ENCODE measurements at regions of chrX and their contacts with region 1.

Region 1: DNA sequence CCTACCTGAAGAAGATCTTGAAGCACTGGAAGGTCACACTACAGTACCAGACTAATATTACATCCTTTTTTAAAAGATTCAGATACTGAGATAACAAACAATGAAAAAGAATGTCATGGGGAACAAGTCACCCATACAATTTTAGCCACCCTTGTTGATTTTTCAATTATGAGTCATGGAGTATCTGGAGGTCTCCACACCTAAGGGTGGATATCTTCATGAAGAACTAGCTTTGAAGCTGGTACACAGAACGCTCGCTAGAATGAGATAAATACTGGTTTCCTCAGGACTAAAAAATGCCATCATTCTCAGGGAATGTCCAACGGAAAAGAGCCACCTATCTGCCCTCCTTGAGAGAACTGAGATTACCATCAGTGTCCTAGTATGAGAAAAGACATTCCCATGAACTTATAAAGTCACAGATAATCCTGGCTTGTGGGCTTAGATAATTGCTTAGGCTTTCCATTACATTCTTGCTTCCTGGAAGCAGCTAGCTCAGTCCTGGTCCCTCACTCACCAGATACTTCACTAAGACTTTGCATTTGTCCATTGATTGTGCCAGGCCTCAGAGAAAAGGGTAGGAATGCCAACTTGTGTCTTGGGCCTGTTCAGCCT is 166.7 kb downstream of the OR13H1 start:
- DNase-seq: peak in 1 of 2 experiments; percentile 56
- H3K4me3 ChIP-seq: no peak overlapping the region
- H3K27ac ChIP-seq: no peak overlapping the region
- H3K4me1 ChIP-seq: no peaks in the 10 kb centered on the region
- H3K27me3 ChIP-seq: no peaks in the 10 kb centered on the region
- CTCF ChIP-seq: no peak

Region 2: DNA sequence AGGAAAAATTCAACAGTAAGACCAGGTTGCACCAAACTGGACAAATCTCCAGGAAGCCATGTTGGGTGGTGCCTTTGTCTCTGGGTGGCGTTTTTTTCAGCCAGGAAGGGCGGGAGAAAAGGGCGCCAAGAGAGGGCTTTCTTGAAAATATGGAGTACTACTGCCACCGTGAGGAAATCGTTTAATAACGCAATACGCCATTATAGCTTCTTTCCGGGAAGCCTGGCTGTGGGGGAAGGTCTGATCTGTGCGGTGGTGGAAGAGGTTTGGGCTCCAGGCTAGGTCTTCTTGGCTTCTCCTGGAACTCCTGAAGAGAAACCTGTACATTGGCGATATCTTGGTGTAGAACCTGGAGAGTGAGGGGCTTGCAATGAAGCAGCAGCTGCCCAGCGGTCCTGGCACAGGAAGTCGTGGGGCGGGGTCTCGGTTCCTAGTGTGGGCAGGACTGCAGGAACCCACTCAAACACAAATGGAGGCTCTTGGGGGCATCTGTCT is 36.0 kb after region 1 on chrX:
- CTCF ChIA-PET with region 1: no interaction called
- POLR2A ChIA-PET with region 1: no interaction called
- intact Hi-C with region 1: loop called (anchors 1 kb)
- DNase-seq: peak in 1 of 2 experiments; percentile 67
- H3K4me3 ChIP-seq: no peak overlapping the region
- H3K27ac ChIP-seq: no peak overlapping the region
- H3K4me1 ChIP-seq: no peaks in the 10 kb centered on the region
- H3K27me3 ChIP-seq: no peaks in the 10 kb centered on the region
- CTCF ChIP-seq: no peak

Region 3: DNA sequence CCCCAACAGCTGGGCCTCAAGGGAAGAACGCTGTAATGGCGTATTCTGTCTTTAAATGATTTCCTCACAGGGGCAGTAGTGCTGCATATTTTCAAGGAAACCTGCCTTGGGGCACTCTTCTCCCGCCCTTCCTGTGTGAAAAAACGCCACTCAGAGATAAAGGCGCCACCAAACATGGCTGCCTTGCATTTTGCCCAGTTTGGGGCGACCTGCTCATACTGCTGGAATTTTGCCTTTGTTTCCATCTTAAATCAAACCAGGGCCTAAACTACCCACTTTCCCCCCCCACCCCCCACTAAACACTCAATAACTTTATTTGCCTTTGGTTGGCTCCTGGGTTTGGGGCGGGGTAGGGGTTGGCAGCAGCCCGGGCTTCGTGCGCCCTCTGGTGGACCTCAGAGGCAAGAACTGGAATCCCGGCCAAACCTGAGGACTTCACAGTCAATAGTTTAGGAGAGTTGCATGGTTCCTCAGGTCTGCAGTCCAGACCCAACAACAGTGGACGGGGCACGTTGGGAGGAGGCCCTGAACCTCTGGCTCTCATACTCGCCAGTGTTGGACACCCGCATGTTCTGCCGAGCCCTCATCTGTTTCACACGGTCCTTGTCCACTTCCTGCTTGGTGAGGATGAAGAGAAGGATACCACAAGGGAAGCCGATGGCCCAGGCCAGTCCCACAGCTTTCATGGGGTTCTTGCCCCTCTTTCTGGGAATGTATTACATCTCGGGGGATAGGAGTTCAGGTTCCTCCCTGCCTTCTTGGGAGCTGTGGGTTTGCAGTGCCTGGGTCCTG is 92.5 kb after region 1 on chrX:
- CTCF ChIA-PET with region 1: no interaction called
- POLR2A ChIA-PET with region 1: no interaction called
- intact Hi-C with region 1: loop called (anchors 1 kb)
- DNase-seq: peak in 1 of 2 experiments; percentile 21
- H3K4me3 ChIP-seq: no peak overlapping the region
- H3K27ac ChIP-seq: no peak overlapping the region
- H3K4me1 ChIP-seq: no peaks in the 10 kb centered on the region
- H3K27me3 ChIP-seq: no peaks in the 10 kb centered on the region
- CTCF ChIP-seq: peak; percentile 52

Region 4: GRCh38 chrX:132153166-132153565 is 442.6 kb after region 1 on chrX:
- CTCF ChIA-PET with region 1: no interaction called
- POLR2A ChIA-PET with region 1: no interaction called
- intact Hi-C with region 1: no loop called
- DNase-seq: no peak
- H3K4me3 ChIP-seq: no peak overlapping the region
- H3K27ac ChIP-seq: no peak overlapping the region
- H3K4me1 ChIP-seq: no peaks in the 10 kb centered on the region
- H3K27me3 ChIP-seq: no peaks in the 10 kb centered on the region
- CTCF ChIP-seq: no peak

Region 5: DNA sequence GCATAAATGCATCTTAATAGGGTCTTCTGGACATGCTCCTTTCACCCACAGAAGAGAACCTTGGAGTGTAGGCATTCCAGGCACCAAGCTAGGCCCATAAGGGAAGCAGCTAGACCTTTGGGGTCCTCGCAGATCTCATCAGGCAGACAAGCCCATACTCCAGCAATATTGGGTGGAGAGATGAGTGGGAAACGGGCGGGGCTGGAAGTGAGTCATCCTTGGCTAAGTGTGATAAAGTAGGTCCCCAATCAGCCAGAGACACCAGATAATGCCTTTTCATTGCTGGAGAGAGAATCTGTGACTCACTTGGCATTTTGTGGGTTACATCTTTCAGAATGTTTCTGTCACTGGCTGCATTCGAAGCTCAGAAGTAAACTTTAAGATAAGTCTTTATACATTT is 911.6 kb after region 1 on chrX:
- CTCF ChIA-PET with region 1: no interaction called
- POLR2A ChIA-PET with region 1: no interaction called
- intact Hi-C with region 1: loop called (anchors 2 kb)
- DNase-seq: peak; percentile 25 to 66
- H3K4me3 ChIP-seq: no peak overlapping the region
- H3K27ac ChIP-seq: no peak overlapping the region
- H3K4me1 ChIP-seq: peaks cover 13% of the 10 kb centered on the region
- H3K27me3 ChIP-seq: no peaks in the 10 kb centered on the region
- CTCF ChIP-seq: no peak

Region 6: GRCh38 chrX:133018229-133018628 is 1307.7 kb after region 1 on chrX:
- CTCF ChIA-PET with region 1: no interaction called
- POLR2A ChIA-PET with region 1: no interaction called
- intact Hi-C with region 1: no loop called
- DNase-seq: no peak
- H3K4me3 ChIP-seq: no peak overlapping the region
- H3K27ac ChIP-seq: no peak overlapping the region
- H3K4me1 ChIP-seq: no peaks in the 10 kb centered on the region
- H3K27me3 ChIP-seq: no peaks in the 10 kb centered on the region
- CTCF ChIP-seq: no peak